MCF 10A (cell line): ENCODE measurements at regions of chr12 and their contacts with region 1.

Region 1: DNA sequence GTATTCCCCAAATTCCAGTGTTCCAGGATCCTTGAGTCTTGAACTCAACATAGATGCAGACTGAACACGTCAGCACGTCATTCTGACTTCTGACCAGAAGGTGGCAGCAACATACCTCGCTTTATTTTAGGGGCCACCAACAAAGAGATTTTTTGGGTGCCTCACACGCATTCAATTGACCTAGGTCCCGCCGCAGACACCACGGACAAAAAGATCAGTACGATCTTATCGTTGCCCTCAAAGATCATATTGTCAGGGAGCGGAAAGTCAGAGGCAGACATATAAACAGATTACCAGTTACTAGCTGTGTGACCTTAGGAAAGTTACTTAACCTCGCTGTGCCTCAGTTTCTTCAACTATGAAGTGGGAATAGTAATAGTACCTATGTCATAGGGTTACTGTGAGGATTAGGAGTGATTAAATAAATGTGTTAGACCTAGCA is 6.5 kb upstream of the PRPH start:
- DNase-seq: peak; percentile 70
- H3K4me3 Mint-ChIP-seq: no peak overlapping the region
- H3K27ac Mint-ChIP-seq: no peak overlapping the region
- H3K4me1 Mint-ChIP-seq: peaks cover 4% of the 10 kb centered on the region
- H3K27me3 Mint-ChIP-seq: no peaks in the 10 kb centered on the region
- CTCF ChIP-seq: peak; percentile 77

Region 2: DNA sequence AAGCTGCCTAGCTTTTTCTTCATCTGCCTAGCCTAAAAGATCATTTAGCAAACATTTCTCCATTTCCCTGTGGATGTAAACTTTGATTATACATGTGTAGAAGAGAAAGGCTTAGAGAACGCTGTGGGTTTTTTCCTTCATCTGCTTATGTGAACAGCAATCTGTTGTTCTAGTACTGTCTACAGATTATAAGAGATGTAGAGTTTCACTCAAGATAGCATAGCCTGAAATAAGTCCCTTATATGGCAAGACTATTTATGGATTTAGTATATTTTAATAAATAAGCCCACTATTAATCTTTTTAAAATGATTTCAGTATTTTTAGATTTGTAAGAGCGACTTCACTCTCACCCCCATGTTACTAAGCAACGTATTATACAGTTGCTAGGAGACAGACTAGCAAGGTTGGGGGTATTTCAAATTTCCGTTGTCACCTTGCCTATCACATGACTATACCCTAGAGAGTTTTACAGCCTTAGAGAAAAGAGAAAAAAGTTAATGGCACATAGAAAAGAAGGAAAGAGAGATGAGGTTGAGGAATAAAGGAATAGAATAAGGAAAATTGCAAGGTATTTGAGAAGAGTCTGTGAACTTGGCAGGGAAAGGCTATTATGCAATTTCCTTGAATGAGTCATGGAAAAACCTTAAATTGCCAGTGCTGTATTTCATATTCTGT is 87.4 kb before region 1 on chr12:
- CTCF ChIA-PET with region 1: no interaction called
- POLR2A ChIA-PET with region 1: no interaction called
- intact Hi-C with region 1: no loop called
- DNase-seq: peak; percentile 83
- H3K4me3 Mint-ChIP-seq: no peak overlapping the region
- H3K27ac Mint-ChIP-seq: peak overlapping the region; percentile 77
- H3K4me1 Mint-ChIP-seq: peaks cover 16% of the 10 kb centered on the region
- H3K27me3 Mint-ChIP-seq: no peaks in the 10 kb centered on the region
- CTCF ChIP-seq: no peak

Region 3: DNA sequence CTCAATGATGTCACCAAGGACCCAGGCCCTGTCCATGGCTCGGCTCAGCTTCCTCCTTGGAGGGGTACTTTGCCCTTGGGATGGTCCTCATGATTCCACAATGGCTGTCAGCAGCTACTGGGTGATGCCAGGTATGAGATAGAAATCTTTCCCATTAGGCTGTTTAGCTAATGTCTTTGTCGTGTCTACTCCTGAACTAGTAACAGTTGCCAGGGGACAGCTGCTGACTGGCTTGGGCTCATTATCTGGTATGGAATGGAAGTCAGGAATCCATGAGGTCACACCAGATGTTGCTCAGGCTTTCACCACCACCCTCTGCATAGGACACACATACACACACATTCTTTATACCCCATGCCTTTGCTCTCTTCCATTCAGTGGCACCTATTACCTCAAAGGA is 15.7 kb after region 1 on chr12:
- CTCF ChIA-PET with region 1: interaction called, 20 read pairs
- POLR2A ChIA-PET with region 1: no interaction called
- intact Hi-C with region 1: no loop called
- DNase-seq: no peak
- H3K4me3 Mint-ChIP-seq: no peak overlapping the region
- H3K27ac Mint-ChIP-seq: no peak overlapping the region
- H3K4me1 Mint-ChIP-seq: no peaks in the 10 kb centered on the region
- H3K27me3 Mint-ChIP-seq: peaks cover 2% of the 10 kb centered on the region
- CTCF ChIP-seq: no peak

Region 4: DNA sequence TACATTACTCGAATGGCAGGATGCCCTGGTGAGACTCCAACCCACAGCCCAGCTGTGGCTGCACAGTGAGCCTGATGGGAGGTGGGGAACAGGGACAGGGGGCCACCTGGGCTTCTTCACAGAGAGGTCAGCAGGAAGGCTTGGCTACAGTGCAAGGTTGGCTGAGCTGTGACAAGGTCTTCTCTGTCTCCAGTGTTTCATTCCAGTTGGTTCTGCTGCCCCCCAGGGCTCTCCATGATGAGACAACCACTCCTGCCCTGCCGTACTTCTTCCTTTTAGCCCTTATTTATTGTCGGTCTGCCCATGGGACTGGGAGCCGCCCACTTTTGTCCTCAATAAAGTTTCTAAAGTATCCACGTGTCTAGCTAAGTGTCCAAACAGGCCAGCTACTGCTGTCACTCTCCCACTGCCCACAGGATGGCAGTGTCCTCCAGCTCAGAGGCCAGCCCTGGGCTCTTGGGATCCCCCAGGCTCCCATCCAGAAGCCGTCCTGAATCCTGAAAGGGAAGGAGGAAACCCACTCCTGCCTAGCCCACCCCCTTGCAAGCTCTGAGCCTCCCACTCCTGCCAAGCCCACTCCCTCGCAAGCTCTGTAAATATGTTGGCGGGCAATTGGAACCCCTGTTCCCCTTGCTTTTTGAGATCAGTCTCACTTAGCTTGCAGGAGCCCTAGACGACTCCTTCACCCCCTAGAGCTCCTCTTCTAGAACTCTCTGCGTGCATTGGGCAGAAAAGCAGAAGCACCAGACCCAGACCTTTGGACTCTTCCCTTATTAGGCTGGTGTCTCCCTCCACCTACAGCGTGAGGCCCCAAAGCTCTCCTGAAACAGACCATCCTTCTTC is 43.2 kb after region 1 on chr12:
- CTCF ChIA-PET with region 1: interaction called, 57 read pairs
- POLR2A ChIA-PET with region 1: no interaction called
- intact Hi-C with region 1: loop called (anchors 5 kb)
- DNase-seq: peak; percentile 51
- H3K4me3 Mint-ChIP-seq: no peak overlapping the region
- H3K27ac Mint-ChIP-seq: no peak overlapping the region
- H3K4me1 Mint-ChIP-seq: no peaks in the 10 kb centered on the region
- H3K27me3 Mint-ChIP-seq: no peaks in the 10 kb centered on the region
- CTCF ChIP-seq: peak; percentile 72

Region 5: GRCh38 chr12:49347384-49348237 is 59.2 kb after region 1 on chr12:
- CTCF ChIA-PET with region 1: interaction called, 251 read pairs
- POLR2A ChIA-PET with region 1: interaction called, 14 read pairs
- intact Hi-C with region 1: no loop called
- DNase-seq: peak; percentile 87
- H3K4me3 Mint-ChIP-seq: peak overlapping the region; percentile 68
- H3K27ac Mint-ChIP-seq: no peak overlapping the region
- H3K4me1 Mint-ChIP-seq: peaks cover 9% of the 10 kb centered on the region
- H3K27me3 Mint-ChIP-seq: peaks cover 29% of the 10 kb centered on the region
- CTCF ChIP-seq: peak; percentile 95

Region 6: DNA sequence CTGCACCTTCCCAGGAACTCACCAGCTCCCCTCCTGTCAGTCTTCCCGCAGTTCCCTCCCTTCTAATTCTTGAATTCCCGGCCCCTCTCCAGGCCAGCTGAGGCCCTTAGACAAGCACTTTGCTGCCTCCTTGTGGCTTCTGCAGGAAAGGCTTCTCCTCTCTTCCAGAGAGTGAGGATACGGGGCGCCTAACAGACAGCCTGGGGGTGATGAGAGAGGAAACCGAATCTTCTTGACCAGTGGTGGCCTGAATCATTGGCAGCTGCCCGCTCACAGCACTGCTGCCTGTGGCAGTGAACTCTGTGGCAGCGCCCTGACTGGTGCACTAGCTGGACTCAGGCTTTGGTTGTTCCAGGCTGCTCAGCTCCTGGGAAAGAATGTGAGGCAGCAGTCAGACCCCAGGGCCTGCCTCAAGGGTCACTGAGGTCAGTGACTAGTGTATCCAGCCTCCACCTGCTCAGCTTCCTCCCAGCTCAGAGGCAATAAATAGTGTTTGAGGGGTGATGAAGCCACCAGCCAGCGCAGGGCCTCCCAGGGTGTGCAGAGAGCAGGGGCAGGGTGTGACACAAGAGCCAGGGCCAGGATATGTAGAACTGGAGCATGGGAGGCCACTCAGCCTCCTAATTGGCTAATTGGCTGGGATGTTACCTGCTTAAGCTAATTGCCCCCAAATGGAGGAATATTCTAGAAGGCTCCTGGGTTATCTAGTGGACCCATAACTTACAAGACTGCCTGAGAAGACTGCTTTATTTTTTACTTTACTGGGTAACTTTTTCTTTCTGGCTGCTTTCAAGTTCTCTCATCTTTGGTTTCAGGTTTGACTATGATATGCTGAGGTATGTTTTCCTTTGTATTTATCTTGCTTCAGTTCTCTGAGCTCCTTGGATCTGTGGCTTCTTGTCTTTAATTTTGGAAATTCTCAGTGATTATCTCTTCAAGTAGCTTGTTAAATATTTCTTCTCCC is 292.4 kb after region 1 on chr12:
- CTCF ChIA-PET with region 1: interaction called, 14 read pairs
- POLR2A ChIA-PET with region 1: no interaction called
- intact Hi-C with region 1: loop called (anchors 10 kb)
- DNase-seq: peak; percentile 86
- H3K4me3 Mint-ChIP-seq: no peak overlapping the region
- H3K27ac Mint-ChIP-seq: no peak overlapping the region
- H3K4me1 Mint-ChIP-seq: peaks cover 6% of the 10 kb centered on the region
- H3K27me3 Mint-ChIP-seq: no peaks in the 10 kb centered on the region
- CTCF ChIP-seq: peak; percentile 75

Region 7: GRCh38 chr12:49730568-49731101 is 442.2 kb after region 1 on chr12:
- CTCF ChIA-PET with region 1: no interaction called
- POLR2A ChIA-PET with region 1: no interaction called
- intact Hi-C with region 1: no loop called
- DNase-seq: peak; percentile 36
- H3K4me3 Mint-ChIP-seq: no peak overlapping the region
- H3K27ac Mint-ChIP-seq: no peak overlapping the region
- H3K4me1 Mint-ChIP-seq: peaks cover 12% of the 10 kb centered on the region
- H3K27me3 Mint-ChIP-seq: peaks cover 17% of the 10 kb centered on the region
- CTCF ChIP-seq: no peak